ENCODE measurements at regions of chr22 and their contacts with region 1.

Region 1: GRCh38 chr22:17665854-17666253 is 27.3 kb downstream of the BCL2L13 start:
- DNase-seq: no peak
- ATAC-seq: no peak
- H3K4me3 ChIP-seq: no peak overlapping the region
- H3K27ac ChIP-seq: no peak overlapping the region
- H3K4me1 ChIP-seq: no peaks in the 10 kb centered on the region
- H3K27me3 ChIP-seq: no peaks in the 10 kb centered on the region
- CTCF ChIP-seq: no peak

Region 2: GRCh38 chr22:17549183-17549582 is 116.7 kb before region 1 on chr22:
- CTCF ChIA-PET with region 1: interaction called, 13 read pairs
- POLR2A ChIA-PET with region 1: no interaction called
- intact Hi-C with region 1: no loop called
- DNase-seq: no peak
- ATAC-seq: no peak
- H3K4me3 ChIP-seq: no peak overlapping the region
- H3K27ac ChIP-seq: no peak overlapping the region
- H3K4me1 ChIP-seq: no peaks in the 10 kb centered on the region
- H3K27me3 ChIP-seq: no peaks in the 10 kb centered on the region
- CTCF ChIP-seq: no peak

Region 3: DNA sequence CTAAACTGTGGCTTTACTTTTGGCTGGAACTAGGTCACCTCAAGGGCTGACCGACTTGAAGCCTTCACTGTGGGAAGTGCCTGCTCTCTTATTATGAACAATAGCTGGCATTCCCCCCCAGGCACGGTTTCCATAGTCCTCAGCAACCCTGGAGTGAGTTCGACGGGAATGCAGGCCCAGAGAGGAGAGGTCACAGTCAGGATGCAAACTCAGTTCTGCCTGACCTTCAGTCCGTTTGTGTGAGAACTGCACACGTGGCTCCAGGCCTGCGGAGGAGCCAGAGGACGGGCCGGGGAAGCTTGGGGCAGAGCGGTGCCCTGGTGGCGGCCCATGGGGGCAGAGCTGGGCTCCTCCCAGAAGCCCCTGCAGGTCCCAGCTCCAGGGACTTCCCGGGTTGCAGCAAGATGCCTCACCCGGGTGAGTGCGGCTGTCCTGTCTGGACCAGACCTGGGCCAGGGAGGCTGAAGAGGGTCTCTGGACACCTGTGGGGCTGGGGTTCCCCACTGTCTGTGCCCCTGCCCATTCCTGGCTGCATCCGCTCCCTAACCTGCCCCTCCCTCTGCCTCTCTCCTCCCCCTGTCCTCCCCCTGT is 85.3 kb before region 1 on chr22:
- CTCF ChIA-PET with region 1: no interaction called
- POLR2A ChIA-PET with region 1: no interaction called
- intact Hi-C with region 1: no loop called
- DNase-seq: no peak
- ATAC-seq: no peak
- H3K4me3 ChIP-seq: no peak overlapping the region
- H3K27ac ChIP-seq: no peak overlapping the region
- H3K4me1 ChIP-seq: peaks cover 13% of the 10 kb centered on the region; the same call in 1 of the 2 replicates
- H3K27me3 ChIP-seq: no peaks in the 10 kb centered on the region
- CTCF ChIP-seq: no peak

Region 4: GRCh38 chr22:17597217-17597616 is 68.6 kb before region 1 on chr22:
- CTCF ChIA-PET with region 1: no interaction called
- POLR2A ChIA-PET with region 1: no interaction called
- intact Hi-C with region 1: no loop called
- DNase-seq: no peak
- ATAC-seq: no peak
- H3K4me3 ChIP-seq: no peak overlapping the region
- H3K27ac ChIP-seq: no peak overlapping the region
- H3K4me1 ChIP-seq: no peaks in the 10 kb centered on the region
- H3K27me3 ChIP-seq: no peaks in the 10 kb centered on the region
- CTCF ChIP-seq: no peak

Region 5: DNA sequence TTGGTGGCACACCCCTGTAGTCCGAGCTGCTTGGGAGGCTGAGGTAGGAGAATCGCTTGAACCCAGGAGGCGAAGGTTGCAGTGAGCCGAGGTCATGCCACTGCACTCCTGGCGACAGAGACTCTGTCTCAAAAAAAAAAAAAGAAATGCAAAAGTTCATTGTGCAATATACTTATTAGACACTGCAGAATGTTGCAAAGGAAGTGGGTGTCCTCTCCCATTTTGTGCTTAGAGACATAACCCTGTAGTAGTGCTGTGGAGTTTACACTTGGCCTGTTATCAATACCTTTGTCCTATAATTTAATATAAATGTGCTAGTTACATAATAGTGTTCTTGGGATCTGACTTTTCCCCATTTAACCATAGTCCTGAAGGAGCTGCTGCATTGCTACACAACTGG is 17.9 kb before region 1 on chr22:
- CTCF ChIA-PET with region 1: no interaction called
- POLR2A ChIA-PET with region 1: no interaction called
- intact Hi-C with region 1: no loop called
- DNase-seq: no peak
- ATAC-seq: no peak
- H3K4me3 ChIP-seq: no peak overlapping the region
- H3K27ac ChIP-seq: no peak overlapping the region
- H3K4me1 ChIP-seq: no peaks in the 10 kb centered on the region
- H3K27me3 ChIP-seq: no peaks in the 10 kb centered on the region
- CTCF ChIP-seq: no peak

Region 6: DNA sequence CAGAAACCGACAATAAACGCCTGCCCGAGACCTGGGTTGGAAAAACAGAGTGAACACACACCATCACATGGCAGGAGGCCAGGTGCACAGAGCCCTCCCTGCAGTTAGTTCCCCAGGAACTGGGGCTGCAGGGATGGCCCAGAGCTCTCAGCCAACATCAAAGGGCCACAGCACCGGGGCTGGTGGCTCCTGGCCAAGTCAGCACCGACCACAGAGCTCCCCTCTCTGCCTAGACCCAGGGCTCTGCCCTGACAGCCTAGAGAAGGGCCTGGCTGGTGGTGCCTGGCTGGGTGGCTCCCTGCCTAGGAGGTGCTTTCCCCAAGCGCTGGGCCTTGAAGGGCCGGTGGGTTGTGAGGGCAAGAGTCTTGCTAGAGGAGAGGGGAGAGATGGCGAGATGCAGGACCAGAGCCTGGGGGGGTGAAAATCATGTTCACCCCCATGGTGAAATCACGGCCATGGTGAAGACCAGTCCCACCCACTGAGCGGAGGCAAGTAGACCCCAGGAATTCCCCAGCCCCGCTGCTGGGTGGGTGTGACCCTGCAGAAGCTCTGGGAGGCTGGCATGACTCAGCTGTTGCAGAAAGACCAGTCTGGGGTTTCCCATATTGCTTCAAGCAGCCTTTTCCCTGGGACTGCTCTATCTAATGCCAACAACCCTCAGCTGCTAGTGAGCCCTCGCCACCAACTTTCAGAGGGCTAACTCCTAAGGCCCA is 115.6 kb after region 1 on chr22:
- CTCF ChIA-PET with region 1: no interaction called
- POLR2A ChIA-PET with region 1: no interaction called
- intact Hi-C with region 1: no loop called
- DNase-seq: peak; percentile 25
- ATAC-seq: peak; percentile 37; the same call in 1 of the 2 replicates
- H3K4me3 ChIP-seq: no peak overlapping the region
- H3K27ac ChIP-seq: no peak overlapping the region
- H3K4me1 ChIP-seq: peaks cover 10% of the 10 kb centered on the region
- H3K27me3 ChIP-seq: no peaks in the 10 kb centered on the region
- CTCF ChIP-seq: no peak

Measured in PC-3 (cell line).